AG04449 (cell line): ENCODE measurements at regions of chr15 and their contacts with region 1.

Region 1: DNA sequence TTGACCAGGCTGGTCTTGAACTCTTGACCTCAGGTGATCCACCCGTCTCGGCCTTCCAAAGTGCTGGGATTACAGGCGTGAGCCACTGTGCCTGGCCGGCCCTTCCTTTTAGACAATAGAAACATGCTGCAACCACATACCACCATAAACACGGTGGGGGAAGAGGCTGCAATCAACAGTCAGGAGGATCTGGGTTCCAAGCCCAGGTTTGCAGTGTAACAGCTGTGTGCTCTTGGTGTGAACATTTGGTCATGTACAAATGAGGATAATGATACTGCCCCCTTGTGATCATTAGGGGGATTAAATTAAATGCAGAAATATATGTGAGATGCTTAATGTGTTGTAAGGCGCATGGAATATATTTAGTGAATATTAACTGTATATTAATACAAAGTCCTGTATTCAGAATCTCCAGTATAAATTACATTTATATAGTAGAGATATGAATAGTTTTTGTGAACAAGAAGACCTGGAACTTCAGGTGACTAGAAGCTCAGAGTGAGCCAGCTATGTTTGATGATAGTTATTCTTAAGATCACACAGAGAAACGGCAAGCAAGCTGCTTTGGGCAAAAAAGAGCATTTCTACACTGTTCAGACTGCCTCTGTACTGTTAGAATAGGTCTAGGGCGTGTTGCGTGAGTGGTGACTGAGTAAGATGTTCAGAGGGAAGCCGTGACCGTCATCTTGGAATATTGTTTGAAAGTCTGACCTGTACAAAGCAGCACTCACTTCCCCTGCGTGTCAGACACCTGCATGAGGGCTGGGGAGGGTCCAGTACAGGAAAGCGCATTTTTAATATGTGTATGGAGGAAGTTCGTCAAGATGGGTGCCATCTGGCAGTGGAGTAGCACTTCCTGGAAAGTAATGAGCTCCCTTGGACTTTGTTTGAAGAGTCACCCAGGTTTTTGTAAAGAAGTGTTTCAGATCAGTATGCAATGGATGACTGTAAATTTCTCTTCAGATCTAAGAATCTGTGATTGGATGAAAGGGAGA is 125.8 kb downstream of the PGPEP1L start:
- DNase-seq: no peak
- H3K4me3 ChIP-seq: no peak overlapping the region
- CTCF ChIP-seq: no peak

Region 2: GRCh38 chr15:98850961-98851573 is 30.8 kb before region 1 on chr15:
- CTCF ChIA-PET with region 1: interaction called, 43 read pairs
- POLR2A ChIA-PET with region 1: interaction called, 3 read pairs
- DNase-seq: no peak
- H3K4me3 ChIP-seq: peak overlapping the region; percentile 64
- CTCF ChIP-seq: peak; percentile 83

Region 3: GRCh38 chr15:98856218-98856907 is 25.5 kb before region 1 on chr15:
- CTCF ChIA-PET with region 1: interaction called, 43 read pairs
- POLR2A ChIA-PET with region 1: interaction called, 4 read pairs
- DNase-seq: peak; percentile 92
- H3K4me3 ChIP-seq: no peak overlapping the region
- CTCF ChIP-seq: no peak

Region 4: GRCh38 chr15:98896802-98897732 is 15.2 kb after region 1 on chr15:
- CTCF ChIA-PET with region 1: interaction called, 41 read pairs
- POLR2A ChIA-PET with region 1: no interaction called
- DNase-seq: peak; percentile 100
- H3K4me3 ChIP-seq: peak overlapping the region; percentile 18; the same call in 1 of the 2 replicates
- CTCF ChIP-seq: no peak

Region 5: DNA sequence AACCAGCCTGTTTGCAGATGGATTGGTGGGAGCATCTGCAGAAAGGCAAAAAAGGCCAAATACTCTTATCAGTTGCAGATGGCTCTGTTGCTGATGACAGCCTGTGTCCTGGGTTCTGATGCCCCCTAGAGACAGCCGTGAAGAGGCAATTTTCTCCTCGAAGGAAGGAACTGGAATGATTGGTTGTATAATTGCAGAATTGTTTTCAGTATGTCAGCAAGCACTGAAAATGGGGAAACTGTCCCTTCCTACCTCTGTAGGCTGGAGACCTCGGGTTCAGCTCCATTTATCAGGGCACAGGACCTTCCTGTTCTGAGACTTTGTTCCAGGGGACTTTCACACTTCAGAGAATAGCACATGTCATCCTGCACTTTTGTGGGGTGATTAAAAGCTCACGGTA is 22.7 kb after region 1 on chr15:
- CTCF ChIA-PET with region 1: interaction called, 49 read pairs
- POLR2A ChIA-PET with region 1: no interaction called
- DNase-seq: no peak
- H3K4me3 ChIP-seq: no peak overlapping the region
- CTCF ChIP-seq: peak; percentile 71

Region 6: GRCh38 chr15:99059010-99059981 is 177.5 kb after region 1 on chr15:
- CTCF ChIA-PET with region 1: interaction called, 11 read pairs
- POLR2A ChIA-PET with region 1: no interaction called
- DNase-seq: peak; percentile 46
- H3K4me3 ChIP-seq: peak overlapping the region; percentile 50
- CTCF ChIP-seq: peak; percentile 59

Region 7: DNA sequence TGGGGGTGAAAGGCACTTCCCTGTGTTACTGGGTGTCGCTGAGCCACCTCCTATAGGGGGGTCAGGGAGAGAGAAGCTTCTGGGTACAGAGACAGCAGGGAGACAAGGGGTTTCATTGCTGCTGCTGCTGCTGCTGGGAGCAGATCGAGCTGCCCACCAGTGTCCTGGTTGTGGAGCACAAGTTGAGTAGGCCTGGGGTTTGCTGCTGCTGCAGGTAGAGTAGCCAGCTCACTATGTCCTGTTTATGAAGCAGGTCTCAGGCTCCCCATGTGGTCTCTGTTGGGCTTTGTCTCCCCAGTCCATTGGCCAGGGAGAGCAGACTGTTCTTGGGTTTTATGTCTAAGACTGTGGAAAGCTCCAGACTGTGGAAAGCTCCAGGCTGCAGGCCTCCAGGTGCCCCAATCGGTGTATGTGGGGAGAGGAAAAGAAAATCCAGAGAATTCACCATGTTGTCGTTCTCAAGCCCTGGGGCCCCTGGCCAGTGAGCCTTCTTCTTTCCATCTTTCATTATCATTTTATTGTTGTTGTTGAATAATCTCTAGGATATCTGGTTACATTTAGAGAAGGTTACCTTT is 1302.2 kb after region 1 on chr15:
- CTCF ChIA-PET with region 1: no interaction called
- POLR2A ChIA-PET with region 1: no interaction called
- DNase-seq: no peak
- H3K4me3 ChIP-seq: no peak overlapping the region
- CTCF ChIP-seq: no peak